ENCODE measurements at regions of chr20 and their contacts with region 1.

Region 1: GRCh38 chr20:45971675-45972499 is at the start of gene ZNF335:
- DNase-seq: peak; percentile 88 to 96
- H3K4me3 ChIP-seq: peak within 1 kb of the TSS; percentile 67 to 99 (median 82)
- H3K27ac ChIP-seq: peak within 1 kb of the TSS; percentile 100
- H3K4me1 ChIP-seq: peaks cover 0 to 8% (median 2%) of the 10 kb centered on the region in 4 experiments; a peak in 4 of 7 replicates
- H3K27me3 ChIP-seq: no peaks in the 10 kb centered on the region
- CTCF ChIP-seq: peak in 1 of 3 experiments; percentile 18; a peak in 1 of 4 replicates
- EP300 ChIP-seq: peak in 1 of 2 experiments; percentile 99; a peak in 2 of 3 replicates
- POLR2A ChIP-seq: peak in 1 of 2 experiments; percentile 88; a peak in 2 of 3 replicates
- RAD21 ChIP-seq: no peak
- total RNA-seq, gene ZNF335: 14.6 and 15.9 TPM in 2 replicates

Region 2: DNA sequence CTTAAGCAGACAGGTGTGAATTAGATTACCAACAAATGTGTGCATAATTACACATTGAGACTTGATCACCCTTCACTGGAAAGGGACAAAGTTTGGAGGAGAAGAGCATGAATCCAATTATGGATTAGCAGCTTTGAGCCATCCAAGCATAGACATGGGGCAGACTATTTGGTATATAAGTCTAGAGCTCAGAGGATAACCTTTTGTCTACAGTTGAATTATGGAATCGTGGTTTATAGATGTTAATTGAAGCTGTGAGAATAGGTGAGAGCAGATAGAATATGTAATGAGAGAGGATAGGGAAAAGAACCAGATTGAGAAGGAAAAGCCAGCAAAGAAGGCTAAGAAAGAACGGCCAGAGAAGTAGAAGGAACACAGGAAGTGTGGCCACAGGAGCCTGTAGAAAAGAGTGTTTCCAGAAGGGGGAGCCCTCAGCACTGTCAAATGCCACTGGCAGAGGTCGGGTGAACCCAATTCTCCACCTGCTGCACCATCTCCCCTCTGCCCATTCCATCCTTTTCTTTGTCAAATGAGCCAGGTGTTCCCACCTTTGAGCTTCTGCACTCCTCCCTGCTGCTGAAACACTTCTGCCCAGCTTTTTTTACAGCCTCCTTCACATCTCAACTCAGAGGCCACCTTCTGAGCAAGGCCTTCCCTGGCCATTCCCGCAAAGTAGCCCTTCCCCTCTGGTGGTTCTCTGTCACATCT is 172.8 kb before region 1 on chr20:
- CTCF ChIA-PET with region 1: interaction called, 10 read pairs
- POLR2A ChIA-PET with region 1: no interaction called
- DNase-seq: peak; percentile 36 to 81
- H3K4me3 ChIP-seq: no peak overlapping the region
- H3K27ac ChIP-seq: no peak overlapping the region
- H3K4me1 ChIP-seq: no peaks in the 10 kb centered on the region; a peak in 1 of 7 replicates
- H3K27me3 ChIP-seq: no peaks in the 10 kb centered on the region
- CTCF ChIP-seq: peak; percentile 67 to 90 (median 82)
- EP300 ChIP-seq: no peak
- POLR2A ChIP-seq: no peak
- RAD21 ChIP-seq: peak; percentile 68 to 83

Region 3: GRCh38 chr20:45924391-45925261 is 47.3 kb before region 1 on chr20:
- CTCF ChIA-PET with region 1: interaction called, 10 read pairs
- POLR2A ChIA-PET with region 1: interaction called, 4 read pairs
- DNase-seq: no peak
- H3K4me3 ChIP-seq: no peak overlapping the region
- H3K27ac ChIP-seq: no peak overlapping the region
- H3K4me1 ChIP-seq: peaks cover 3 to 7% (median 5%) of the 10 kb centered on the region in 4 experiments; a peak in 5 of 7 replicates
- H3K27me3 ChIP-seq: no peaks in the 10 kb centered on the region
- CTCF ChIP-seq: no peak
- EP300 ChIP-seq: no peak
- POLR2A ChIP-seq: no peak
- RAD21 ChIP-seq: no peak

Region 4: GRCh38 chr20:45946149-45946970 is 25.5 kb before region 1 on chr20:
- CTCF ChIA-PET with region 1: interaction called, 41 read pairs
- POLR2A ChIA-PET with region 1: interaction called, 238 read pairs
- DNase-seq: no peak
- H3K4me3 ChIP-seq: no peak overlapping the region
- H3K27ac ChIP-seq: no peak overlapping the region
- H3K4me1 ChIP-seq: no peaks in the 10 kb centered on the region
- H3K27me3 ChIP-seq: no peaks in the 10 kb centered on the region; a peak in 1 of 7 replicates
- CTCF ChIP-seq: no peak
- EP300 ChIP-seq: no peak
- POLR2A ChIP-seq: no peak
- RAD21 ChIP-seq: no peak

Region 5: GRCh38 chr20:45987108-45987780 is 15.4 kb after region 1 on chr20:
- CTCF ChIA-PET with region 1: interaction called, 30 read pairs
- POLR2A ChIA-PET with region 1: interaction called, 12 read pairs
- DNase-seq: peak in 1 of 2 experiments; percentile 95
- H3K4me3 ChIP-seq: no peak overlapping the region
- H3K27ac ChIP-seq: no peak overlapping the region
- H3K4me1 ChIP-seq: peaks cover 0 to 8% (median 6%) of the 10 kb centered on the region in 4 experiments; a peak in 5 of 7 replicates
- H3K27me3 ChIP-seq: no peaks in the 10 kb centered on the region
- CTCF ChIP-seq: peak; percentile 90 to 96 (median 95)
- EP300 ChIP-seq: no peak
- POLR2A ChIP-seq: no peak
- RAD21 ChIP-seq: peak; percentile 79 to 89

Region 6: GRCh38 chr20:45993197-45993951 is 21.5 kb after region 1 on chr20:
- CTCF ChIA-PET with region 1: interaction called, 19 read pairs
- POLR2A ChIA-PET with region 1: no interaction called
- DNase-seq: no peak
- H3K4me3 ChIP-seq: no peak overlapping the region
- H3K27ac ChIP-seq: no peak overlapping the region
- H3K4me1 ChIP-seq: peaks cover 0 to 6% (median 3%) of the 10 kb centered on the region in 4 experiments; a peak in 3 of 7 replicates
- H3K27me3 ChIP-seq: no peaks in the 10 kb centered on the region
- CTCF ChIP-seq: no peak
- EP300 ChIP-seq: no peak
- POLR2A ChIP-seq: no peak
- RAD21 ChIP-seq: no peak

Region 7: DNA sequence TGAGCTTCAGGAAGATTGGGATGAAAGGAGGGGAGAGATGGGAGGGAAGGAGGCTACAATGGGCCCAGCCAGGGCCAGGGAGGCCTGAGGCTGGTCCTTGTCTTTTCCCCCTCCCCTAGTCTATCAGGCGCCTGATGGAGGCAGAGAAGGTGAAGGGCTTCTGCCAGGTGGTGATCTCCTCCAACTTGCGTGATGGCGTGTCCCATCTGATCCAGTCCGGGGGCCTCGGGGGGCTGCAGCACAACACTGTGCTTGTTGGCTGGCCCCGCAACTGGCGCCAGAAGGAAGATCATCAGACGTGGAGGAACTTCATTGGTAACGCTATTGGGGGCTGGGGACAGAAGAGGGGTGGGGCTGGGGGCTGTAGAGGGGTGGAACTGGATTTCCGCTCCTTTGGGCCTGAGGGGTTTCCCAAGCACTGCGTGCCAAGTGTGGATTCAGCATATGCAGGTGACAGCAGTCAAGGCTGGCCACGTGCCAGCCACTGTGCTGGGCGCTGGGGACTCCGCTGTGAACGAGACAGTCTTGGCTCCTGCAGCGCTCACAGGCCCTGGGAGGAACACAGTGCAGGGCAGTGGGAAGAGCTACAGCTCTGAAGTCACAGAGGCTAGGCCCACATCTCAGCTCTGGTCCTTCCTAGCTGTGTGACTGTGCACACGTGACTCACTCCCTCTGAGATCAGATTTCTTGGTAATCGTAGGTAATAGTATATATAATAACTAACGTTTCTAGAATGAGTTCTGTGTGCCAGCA is 79.8 kb after region 1 on chr20:
- CTCF ChIA-PET with region 1: no interaction called
- POLR2A ChIA-PET with region 1: no interaction called
- DNase-seq: no peak
- H3K4me3 ChIP-seq: no peak overlapping the region
- H3K27ac ChIP-seq: no peak overlapping the region
- H3K4me1 ChIP-seq: no peaks in the 10 kb centered on the region
- H3K27me3 ChIP-seq: peaks cover 0 to 32% (median 16%) of the 10 kb centered on the region in 4 experiments; a peak in 6 of 7 replicates
- CTCF ChIP-seq: no peak
- EP300 ChIP-seq: no peak
- POLR2A ChIP-seq: no peak
- RAD21 ChIP-seq: no peak

Region 8: GRCh38 chr20:46179863-46180262 is 208.0 kb after region 1 on chr20:
- CTCF ChIA-PET with region 1: no interaction called
- POLR2A ChIA-PET with region 1: no interaction called
- DNase-seq: no peak
- H3K4me3 ChIP-seq: no peak overlapping the region
- H3K27ac ChIP-seq: no peak overlapping the region
- H3K4me1 ChIP-seq: no peaks in the 10 kb centered on the region
- H3K27me3 ChIP-seq: peaks cover 0 to 11% (median 8%) of the 10 kb centered on the region in 4 experiments; a peak in 6 of 7 replicates
- CTCF ChIP-seq: no peak
- EP300 ChIP-seq: no peak
- POLR2A ChIP-seq: no peak
- RAD21 ChIP-seq: no peak

Measured in H1 (cell line).